Endothelial cell of umbilical vein (primary cell): ENCODE measurements at regions of chr10 and their contacts with region 1.

Region 1: GRCh38 chr10:50367732-50368131 is 116.4 kb upstream of the ASAH2 start:
- DNase-seq: peak; percentile 61
- H3K4me3 ChIP-seq: no peak overlapping the region
- H3K27ac ChIP-seq: no peak overlapping the region
- H3K4me1 ChIP-seq: peaks cover under 1% of the 10 kb centered on the region
- H3K27me3 ChIP-seq: no peaks in the 10 kb centered on the region
- CTCF ChIP-seq: peak; percentile 34 to 51
- POLR2A ChIP-seq: no peak

Region 2: GRCh38 chr10:50325449-50326171 is 42.1 kb before region 1 on chr10:
- CTCF ChIA-PET with region 1: interaction called, 17 read pairs
- POLR2A ChIA-PET with region 1: no interaction called
- dilution Hi-C with region 1: no loop called
- intact Hi-C with region 1: no loop called
- DNase-seq: peak; percentile 74
- H3K4me3 ChIP-seq: no peak overlapping the region
- H3K27ac ChIP-seq: peak overlapping the region; percentile 23
- H3K4me1 ChIP-seq: peaks cover 24% of the 10 kb centered on the region
- H3K27me3 ChIP-seq: no peaks in the 10 kb centered on the region
- CTCF ChIP-seq: no peak
- POLR2A ChIP-seq: no peak

Region 3: GRCh38 chr10:50379616-50380015 is 11.9 kb after region 1 on chr10:
- CTCF ChIA-PET with region 1: interaction called, 23 read pairs
- POLR2A ChIA-PET with region 1: no interaction called
- dilution Hi-C with region 1: no loop called
- intact Hi-C with region 1: no loop called
- DNase-seq: peak; percentile 30
- H3K4me3 ChIP-seq: no peak overlapping the region
- H3K27ac ChIP-seq: no peak overlapping the region
- H3K4me1 ChIP-seq: peaks cover 3% of the 10 kb centered on the region
- H3K27me3 ChIP-seq: no peaks in the 10 kb centered on the region
- CTCF ChIP-seq: no peak
- POLR2A ChIP-seq: no peak

Region 4: GRCh38 chr10:50396491-50397311 is 29.0 kb after region 1 on chr10:
- CTCF ChIA-PET with region 1: interaction called, 13 read pairs
- POLR2A ChIA-PET with region 1: no interaction called
- dilution Hi-C with region 1: no loop called
- intact Hi-C with region 1: no loop called
- DNase-seq: no peak
- H3K4me3 ChIP-seq: no peak overlapping the region
- H3K27ac ChIP-seq: no peak overlapping the region
- H3K4me1 ChIP-seq: peaks cover 18% of the 10 kb centered on the region
- H3K27me3 ChIP-seq: no peaks in the 10 kb centered on the region
- CTCF ChIP-seq: no peak
- POLR2A ChIP-seq: no peak

Region 5: GRCh38 chr10:50653142-50653541 is 285.4 kb after region 1 on chr10:
- CTCF ChIA-PET with region 1: interaction called, 18 read pairs
- POLR2A ChIA-PET with region 1: no interaction called
- dilution Hi-C with region 1: no loop called
- intact Hi-C with region 1: no loop called
- DNase-seq: peak; percentile 54
- H3K4me3 ChIP-seq: no peak overlapping the region
- H3K27ac ChIP-seq: no peak overlapping the region
- H3K4me1 ChIP-seq: peaks cover 22% of the 10 kb centered on the region
- H3K27me3 ChIP-seq: no peaks in the 10 kb centered on the region
- CTCF ChIP-seq: peak; percentile 29 to 42
- POLR2A ChIP-seq: no peak